Cardiac septum (tissue), 1 donor: ENCODE measurements at regions of chr1 and their contacts with region 1.

Region 1: DNA sequence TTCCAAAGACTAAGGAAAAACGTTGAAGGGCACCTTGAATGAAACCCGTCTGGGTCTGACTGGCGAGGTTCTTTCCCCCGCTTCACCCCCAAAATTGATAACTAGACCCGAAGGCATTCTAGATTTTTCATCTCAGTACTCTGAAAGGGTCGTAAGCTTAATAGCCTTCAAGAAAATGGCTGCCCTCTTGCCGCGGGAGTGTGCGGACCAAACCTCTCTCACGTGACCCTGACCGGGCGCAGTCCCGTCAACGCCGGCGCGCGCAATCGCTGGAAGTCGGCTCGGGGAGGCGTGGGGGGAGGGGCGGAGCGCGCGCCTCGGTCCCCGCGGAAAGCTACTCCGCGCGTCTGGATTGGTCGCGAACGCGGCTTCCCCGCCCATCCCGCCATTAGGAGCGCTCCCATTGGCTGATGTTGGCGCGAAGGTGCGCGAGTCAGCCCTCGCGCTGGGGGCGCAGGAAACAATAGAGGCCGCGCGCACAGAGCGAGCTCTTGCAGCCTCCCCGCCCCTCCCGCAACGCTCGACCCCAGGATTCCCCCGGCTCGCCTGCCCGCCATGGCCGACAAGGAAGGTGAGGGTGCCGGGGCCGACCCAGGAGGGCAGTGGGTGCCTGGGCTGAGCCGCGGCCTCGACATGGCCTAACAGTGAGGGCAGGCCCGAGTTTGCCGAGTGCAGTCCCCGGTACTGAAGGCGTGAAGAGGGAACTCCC is at the start of gene RBBP4:
- DNase-seq: peak; percentile 99
- total RNA-seq, gene RBBP4: 96.0 TPM

Region 2: DNA sequence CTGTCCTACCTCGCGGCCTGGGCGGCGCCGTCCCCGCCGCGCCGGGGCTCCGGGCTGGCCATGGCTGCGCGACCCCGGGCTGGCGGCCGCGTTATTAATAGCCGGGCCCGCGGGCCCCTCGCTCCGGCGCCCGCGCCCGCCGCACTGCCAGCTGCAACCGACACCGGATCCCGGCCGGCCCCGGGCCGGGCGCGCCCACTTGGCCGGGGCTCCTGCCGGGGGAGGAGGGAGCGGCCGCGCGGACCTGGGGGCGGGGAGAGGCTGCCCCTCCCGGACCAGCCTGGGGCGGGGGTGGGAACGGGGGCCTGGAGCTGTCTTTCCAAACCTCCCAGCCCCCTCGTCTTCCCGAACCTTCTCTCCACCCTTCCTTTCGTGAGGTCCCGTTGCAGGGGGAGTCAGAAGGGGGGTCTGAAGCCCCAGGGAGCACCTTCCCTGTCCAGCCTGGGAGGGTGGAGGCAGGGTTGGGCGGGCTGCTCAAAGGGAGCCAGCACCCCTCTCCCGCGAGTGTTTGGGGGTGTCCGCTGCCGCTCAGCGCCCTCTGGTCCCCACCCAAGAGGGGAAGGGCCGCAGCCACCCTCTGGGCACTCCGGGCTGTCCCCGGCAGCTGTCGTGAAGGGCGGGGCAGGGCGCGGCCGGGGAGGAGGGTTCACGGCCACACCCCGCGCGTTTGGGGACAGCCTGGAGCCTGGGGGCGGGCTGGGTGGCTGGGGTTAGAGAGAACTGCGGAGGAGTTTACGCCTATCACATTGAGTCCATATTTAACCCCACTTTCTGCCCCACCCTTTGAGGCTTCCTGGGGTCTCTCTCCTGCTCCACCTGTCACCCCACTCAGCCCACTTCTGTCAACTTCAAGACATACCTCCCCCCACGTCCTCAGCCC is 51.9 kb after region 1 on chr1 and contains the start of gene SYNC:
- intact Hi-C with region 1: loop called (anchors 2 kb)
- DNase-seq: peak; percentile 82
- total RNA-seq, gene SYNC: 18.2 TPM

Region 3: GRCh38 chr1:32801096-32801715 is 150.3 kb after region 1 on chr1:
- intact Hi-C with region 1: no loop called
- DNase-seq: no peak

Region 4: DNA sequence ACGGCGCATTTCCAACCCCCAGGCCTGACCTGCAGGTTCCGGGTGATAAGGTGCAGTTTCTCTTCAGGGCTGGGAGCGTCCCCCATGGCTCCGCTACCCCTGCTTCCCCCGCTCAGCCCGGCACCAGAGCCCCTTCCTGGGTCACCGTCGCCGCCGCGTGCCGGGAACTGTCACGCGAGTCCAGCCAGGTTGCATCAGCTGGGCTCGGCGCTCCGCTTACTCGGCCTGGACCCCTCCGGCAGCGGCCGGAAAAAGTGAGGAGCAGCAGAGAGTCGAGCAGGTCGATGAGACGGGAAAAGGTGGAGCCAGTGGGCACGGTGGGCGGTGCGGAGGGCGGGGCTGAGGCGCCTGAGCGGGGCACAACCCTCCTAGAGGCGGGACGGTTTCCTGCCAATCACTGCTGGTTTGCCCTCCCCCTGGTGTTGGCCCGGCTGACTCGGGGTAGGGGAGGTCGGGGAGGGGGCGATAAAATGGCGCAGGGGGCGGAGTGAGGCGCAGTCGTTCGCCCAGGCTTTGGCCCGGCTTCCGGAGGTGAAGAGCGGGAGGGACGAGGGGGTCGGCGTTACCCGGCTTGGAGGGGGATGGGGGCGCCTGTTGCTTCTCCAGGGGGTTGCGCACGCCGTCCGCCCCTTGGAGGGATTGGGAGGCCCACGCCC is 166.4 kb after region 1 on chr1 and contains the starts of genes S100PBP and YARS1:
- intact Hi-C with region 1: loop called (anchors 2 kb)
- DNase-seq: peak; percentile 100
- total RNA-seq, gene S100PBP: 12.5 TPM
- total RNA-seq, gene YARS1: 27.8 TPM

Region 5: GRCh38 chr1:33743221-33743998 is 1092.5 kb after region 1 on chr1:
- intact Hi-C with region 1: no loop called
- DNase-seq: no peak